Dorsolateral prefrontal cortex (tissue), 120 donors: ENCODE measurements at regions of chr3 and their contacts with region 1.

Region 1: DNA sequence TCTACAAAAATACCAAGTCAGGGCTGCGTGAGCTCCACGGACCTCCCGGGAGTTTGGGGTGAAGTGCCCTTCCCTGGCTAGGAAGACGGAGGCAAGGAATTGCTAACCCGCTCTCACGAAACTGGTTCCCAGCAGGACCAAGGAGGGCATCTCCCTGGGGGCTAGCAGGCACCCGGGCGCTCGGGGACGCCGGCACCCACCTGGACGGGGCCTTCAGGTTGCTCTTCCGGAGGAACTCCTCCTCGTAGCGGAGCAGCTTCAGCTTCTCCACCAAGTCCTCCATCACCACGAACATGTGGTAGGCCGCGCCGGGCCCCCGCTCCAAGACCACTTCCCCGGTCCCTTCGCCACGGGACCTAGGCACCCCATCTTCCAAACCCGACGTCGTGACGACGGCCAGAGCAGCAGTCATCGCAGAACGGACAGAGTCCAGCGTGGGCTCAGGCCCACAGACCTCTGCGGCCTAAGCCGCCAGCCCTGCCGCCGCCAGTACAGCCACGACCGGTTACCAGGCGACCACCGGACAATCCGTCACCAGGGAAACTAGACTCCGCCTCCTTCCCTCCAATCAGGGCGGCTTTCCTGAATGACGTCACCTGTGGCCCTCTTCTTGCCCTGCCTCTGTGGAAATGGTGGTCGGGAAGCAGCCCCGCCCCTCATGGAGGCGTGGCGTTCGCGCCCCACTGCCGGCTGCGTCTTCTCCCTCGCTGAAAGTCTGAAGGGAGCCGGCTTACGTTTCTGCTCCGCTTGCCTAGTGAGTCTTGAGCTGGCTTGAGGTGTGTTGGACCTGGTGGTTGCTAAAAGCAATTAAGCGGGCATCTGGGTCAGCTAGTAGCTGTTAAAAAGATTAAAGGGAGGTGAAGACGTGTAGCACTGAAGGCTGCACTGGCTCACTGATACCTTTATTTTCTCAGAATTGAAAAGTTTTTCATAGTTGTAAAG is at the start of gene IFT57:
- DNase-seq: peak; percentile 97 to 99 (median 99)
- H3K4me3 ChIP-seq: peak within 1 kb of the TSS; percentile 70 to 98 (median 86)
- H3K27ac ChIP-seq: peak within 1 kb of the TSS in 58 of 59 donors; percentile 11 to 90 (median 76)
- H3K27me3 ChIP-seq: no peaks in the 10 kb centered on the region
- CTCF ChIP-seq: peak in 17 of 56 donors; percentile 9 to 44 (median 23)
- total RNA-seq, gene IFT57: 22.4 to 63.6 (median 43.7) TPM

Region 2: DNA sequence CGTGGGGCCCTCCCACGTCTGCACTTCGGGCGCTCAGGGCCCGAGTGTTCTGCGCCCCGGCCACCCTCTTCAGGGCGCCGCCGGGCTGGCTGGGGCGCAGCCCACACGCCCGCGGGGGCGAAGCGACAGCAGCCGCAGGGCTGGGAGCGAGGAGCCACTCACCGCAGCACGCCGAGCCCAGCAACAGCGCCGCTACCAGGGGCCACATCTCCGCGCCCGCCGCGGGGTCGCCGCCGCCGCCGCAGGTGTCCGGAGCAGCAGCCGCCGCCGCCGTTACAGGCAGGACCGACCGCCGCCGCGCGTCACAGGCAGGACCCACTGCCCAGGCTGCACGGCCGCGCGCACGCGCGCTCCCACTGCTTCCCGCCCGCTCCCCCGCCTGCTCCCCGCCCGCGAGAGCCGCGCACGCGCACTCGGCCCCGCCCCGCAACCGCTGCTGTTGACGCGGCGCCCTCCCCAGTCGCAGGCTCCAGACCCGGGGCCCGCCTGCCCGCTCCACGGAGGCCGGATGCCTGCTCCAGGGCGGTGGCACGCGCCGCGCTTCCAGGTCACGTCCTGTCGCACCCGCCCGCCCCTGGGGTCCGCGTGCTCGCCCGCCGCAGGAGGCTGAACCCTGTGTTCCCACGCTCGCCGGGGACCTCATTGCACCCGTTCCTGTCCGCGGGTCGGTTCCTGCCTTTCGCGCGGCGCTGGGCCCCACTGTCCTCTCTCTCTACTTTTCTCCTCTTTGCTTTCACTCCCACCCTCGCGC is 131.3 kb before region 1 on chr3 and contains the start of gene CD47:
- intact Hi-C with region 1: loop called (anchors 2 to 5 kb)
- DNase-seq: peak; percentile 85 to 97 (median 92)
- H3K4me3 ChIP-seq: peak within 1 kb of the TSS; percentile 72 to 99 (median 91)
- H3K27ac ChIP-seq: peak within 1 kb of the TSS; percentile 72 to 98 (median 93)
- H3K27me3 ChIP-seq: no peaks in the 10 kb centered on the region
- CTCF ChIP-seq: peak in 18 of 56 donors; percentile 0 to 46 (median 17)
- total RNA-seq, gene CD47: 66.8 to 236 (median 180) TPM

Region 3: DNA sequence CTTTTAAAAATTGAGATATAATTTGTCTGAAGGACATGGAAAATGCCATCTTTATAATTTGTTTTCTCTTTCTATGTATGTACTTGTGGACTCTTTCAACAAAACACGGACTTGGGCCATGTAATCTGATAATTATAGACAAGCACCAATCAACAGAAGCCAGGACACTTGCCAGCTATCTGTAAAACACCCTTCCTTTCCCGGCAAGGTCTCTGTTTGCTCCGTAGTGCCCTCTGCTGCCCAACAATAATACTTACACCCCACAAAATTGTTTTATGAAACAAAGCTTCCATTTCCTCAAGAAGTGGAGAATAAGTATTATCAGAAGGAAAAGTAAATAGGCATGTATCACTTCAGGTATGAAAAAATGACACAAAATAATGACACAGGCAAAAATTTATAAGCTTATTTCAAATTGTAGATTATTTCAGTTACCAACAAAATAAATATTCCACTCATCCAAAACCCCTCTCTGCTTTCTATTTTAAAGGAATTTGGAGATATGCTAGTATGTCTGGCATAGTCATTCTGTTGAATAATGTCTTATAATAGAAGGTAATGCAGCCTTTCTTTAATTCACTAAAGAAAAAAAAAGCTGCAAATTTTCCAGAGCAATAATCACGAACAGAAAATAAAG is 255.4 kb after region 1 on chr3:
- intact Hi-C with region 1: loop called (anchors 10 kb)
- DNase-seq: peak in 5 of 10 donors; percentile 17 to 50 (median 35)
- H3K4me3 ChIP-seq: peak overlapping the region in 23 of 59 donors; percentile 4 to 49 (median 20)
- H3K27ac ChIP-seq: no peak overlapping the region
- H3K27me3 ChIP-seq: no peaks in the 10 kb centered on the region
- CTCF ChIP-seq: peak; percentile 49 to 89 (median 76)

Region 4: DNA sequence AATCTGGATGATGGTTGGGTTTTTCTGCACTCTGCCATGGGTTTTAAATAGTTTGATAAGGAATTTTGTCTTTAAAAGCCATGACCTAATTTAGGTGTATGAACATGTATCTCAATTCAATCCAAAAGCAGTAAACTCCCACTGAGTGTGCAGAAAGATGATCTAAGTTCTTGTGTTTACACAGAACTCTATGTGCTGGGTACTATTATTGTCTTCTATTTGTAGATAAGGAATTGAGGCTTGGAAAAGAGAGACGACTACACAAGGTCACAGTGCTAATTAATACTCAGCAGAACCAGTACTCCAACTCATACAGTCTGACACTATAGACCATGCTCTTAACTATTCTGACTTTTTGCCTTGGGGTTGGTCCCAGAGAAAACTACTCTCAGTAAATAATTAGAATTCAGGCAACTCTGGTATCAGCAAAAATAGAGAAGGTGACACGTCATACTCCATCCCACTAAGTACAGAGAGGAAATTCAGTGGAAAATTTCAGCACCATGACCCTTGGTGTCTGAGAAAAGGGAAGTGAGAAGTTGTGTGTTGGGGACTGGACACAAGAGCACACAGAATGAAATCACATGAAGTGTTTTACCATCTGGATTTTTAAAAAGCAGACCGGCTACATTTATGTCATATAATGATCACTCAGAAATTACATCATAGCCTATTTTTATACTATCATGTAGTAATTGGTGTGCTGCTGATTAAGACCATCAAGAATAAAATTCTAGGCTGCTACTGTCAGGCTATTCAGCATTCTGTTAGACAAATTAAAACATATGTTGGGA is 306.5 kb after region 1 on chr3:
- intact Hi-C with region 1: no loop called
- DNase-seq: no peak
- H3K4me3 ChIP-seq: no peak overlapping the region
- H3K27ac ChIP-seq: no peak overlapping the region
- H3K27me3 ChIP-seq: peaks cover 0 to 6% (median 0%) of the 10 kb centered on the region in 45 donors
- CTCF ChIP-seq: no peak